Naive thymus-derived CD4-positive, alpha-beta T cell (primary cell): ENCODE measurements at regions of chr19 and their contacts with region 1.

Region 1: DNA sequence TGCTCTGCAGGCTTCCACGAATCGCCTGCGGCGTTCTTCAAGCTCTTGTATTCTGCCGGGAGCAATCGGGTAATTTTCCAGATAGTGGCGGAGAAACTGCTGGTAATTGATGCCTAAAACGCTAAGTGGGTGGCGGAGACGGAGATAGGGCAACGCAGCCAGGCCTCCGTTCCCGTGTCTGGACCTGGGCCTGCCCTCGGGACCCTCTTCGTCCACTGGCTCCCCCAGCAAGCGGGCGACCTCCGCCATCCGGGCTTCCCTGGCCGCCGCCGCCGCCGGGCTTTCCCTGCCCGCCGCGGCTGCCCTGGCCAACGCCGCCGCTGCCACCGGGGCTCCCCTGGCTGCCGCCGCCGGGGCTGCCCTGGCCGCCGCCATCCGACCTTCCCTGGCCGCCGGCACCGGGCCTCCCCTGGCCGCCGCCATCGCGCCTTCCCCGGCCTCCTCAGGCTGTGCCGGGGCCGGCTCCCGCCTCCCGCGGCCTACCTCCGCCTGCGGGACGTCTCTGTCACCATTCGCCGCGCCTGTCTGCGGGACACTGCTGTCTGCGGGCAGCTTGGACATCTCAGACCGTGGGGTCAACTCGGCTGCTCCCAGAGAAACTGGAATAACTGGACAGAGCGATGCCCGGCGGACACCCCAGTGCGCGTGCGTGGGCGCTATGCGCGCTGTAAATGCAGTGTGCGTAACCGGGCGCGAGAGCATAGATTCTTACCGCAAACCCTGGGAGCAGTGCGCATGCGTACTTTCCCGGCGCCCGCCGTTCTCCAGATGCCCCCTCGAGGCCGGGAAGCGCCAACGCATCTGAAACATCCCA is at the start of gene EID2:
- DNase-seq: peak; percentile 90 to 95 (median 91)
- ATAC-seq: peak; percentile 96
- H3K4me3 ChIP-seq: peak within 1 kb of the TSS; percentile 94
- H3K4me3 Mint-ChIP-seq: peak within 1 kb of the TSS; percentile 95 to 98 (median 97)
- H3K27ac ChIP-seq: peak within 1 kb of the TSS; percentile 98
- H3K27ac Mint-ChIP-seq: peak within 1 kb of the TSS; percentile 94 to 99 (median 98)
- H3K4me1 ChIP-seq: peaks cover 16 to 21% of the 10 kb centered on the region in 2 donors
- H3K4me1 Mint-ChIP-seq: peaks cover 45 to 85% (median 68%) of the 10 kb centered on the region in 7 donors
- H3K27me3 ChIP-seq: no peaks in the 10 kb centered on the region
- H3K27me3 Mint-ChIP-seq: peaks cover 0 to 2% (median 0%) of the 10 kb centered on the region in 5 donors
- total RNA-seq, gene EID2: 12.2 to 29.1 (median 16.1) TPM

Region 2: GRCh38 chr19:39212375-39212742 is 327.4 kb before region 1 on chr19:
- CTCF ChIA-PET with region 1: no interaction called
- POLR2A ChIA-PET with region 1: no interaction called
- intact Hi-C with region 1: loop called in 1 of 2 experiments (anchors 1 kb)
- DNase-seq: peak in 8 of 9 donors; percentile 24 to 58 (median 46)
- ATAC-seq: peak; percentile 80
- H3K4me3 ChIP-seq: no peak overlapping the region
- H3K4me3 Mint-ChIP-seq: no peak overlapping the region
- H3K27ac ChIP-seq: no peak overlapping the region
- H3K27ac Mint-ChIP-seq: no peak overlapping the region
- H3K4me1 ChIP-seq: no peaks in the 10 kb centered on the region
- H3K4me1 Mint-ChIP-seq: no peaks in the 10 kb centered on the region
- H3K27me3 ChIP-seq: no peaks in the 10 kb centered on the region
- H3K27me3 Mint-ChIP-seq: peaks cover 0 to 13% (median 5%) of the 10 kb centered on the region in 5 donors

Region 3: GRCh38 chr19:39435499-39436349 is 104.0 kb before region 1 on chr19 and contains the start of gene RPS16:
- CTCF ChIA-PET with region 1: interaction called, 24 read pairs
- POLR2A ChIA-PET with region 1: interaction called, 6 read pairs
- intact Hi-C with region 1: loop called in 1 of 2 experiments (anchors 1 kb)
- DNase-seq: peak; percentile 93 to 100 (median 98)
- ATAC-seq: peak; percentile 98
- H3K4me3 ChIP-seq: peak within 1 kb of the TSS; percentile 98
- H3K4me3 Mint-ChIP-seq: peak within 1 kb of the TSS; percentile 92 to 100 (median 98)
- H3K27ac ChIP-seq: peak within 1 kb of the TSS; percentile 97
- H3K27ac Mint-ChIP-seq: peak within 1 kb of the TSS; percentile 95 to 100 (median 99)
- H3K4me1 ChIP-seq: peaks cover 27% of the 10 kb centered on the region in 2 donors
- H3K4me1 Mint-ChIP-seq: peaks cover 20 to 53% (median 40%) of the 10 kb centered on the region in 7 donors
- H3K27me3 ChIP-seq: no peaks in the 10 kb centered on the region
- H3K27me3 Mint-ChIP-seq: peaks cover 0 to 5% (median 0%) of the 10 kb centered on the region in 5 donors
- total RNA-seq, gene RPS16: 2,281 to 4,335 (median 4,063) TPM

Region 4: GRCh38 chr19:39502640-39503417 is 36.9 kb before region 1 on chr19:
- CTCF ChIA-PET with region 1: interaction called, 3 read pairs
- POLR2A ChIA-PET with region 1: interaction called, 5 read pairs
- intact Hi-C with region 1: loop called in 1 of 2 experiments (anchors 2 kb)
- DNase-seq: peak; percentile 67 to 88 (median 78)
- ATAC-seq: peak; percentile 94
- H3K4me3 ChIP-seq: no peak overlapping the region
- H3K4me3 Mint-ChIP-seq: peak overlapping the region in 5 of 10 donors; percentile 4 to 48 (median 16)
- H3K27ac ChIP-seq: no peak overlapping the region
- H3K27ac Mint-ChIP-seq: peak overlapping the region in 3 of 9 donors; percentile 48 to 71 (median 66)
- H3K4me1 ChIP-seq: peaks cover 11 to 21% of the 10 kb centered on the region in 2 donors
- H3K4me1 Mint-ChIP-seq: peaks cover 26 to 38% (median 35%) of the 10 kb centered on the region in 7 donors
- H3K27me3 ChIP-seq: peaks cover 12 to 19% of the 10 kb centered on the region in 2 donors
- H3K27me3 Mint-ChIP-seq: peaks cover 55 to 73% (median 62%) of the 10 kb centered on the region in 5 donors

Region 5: DNA sequence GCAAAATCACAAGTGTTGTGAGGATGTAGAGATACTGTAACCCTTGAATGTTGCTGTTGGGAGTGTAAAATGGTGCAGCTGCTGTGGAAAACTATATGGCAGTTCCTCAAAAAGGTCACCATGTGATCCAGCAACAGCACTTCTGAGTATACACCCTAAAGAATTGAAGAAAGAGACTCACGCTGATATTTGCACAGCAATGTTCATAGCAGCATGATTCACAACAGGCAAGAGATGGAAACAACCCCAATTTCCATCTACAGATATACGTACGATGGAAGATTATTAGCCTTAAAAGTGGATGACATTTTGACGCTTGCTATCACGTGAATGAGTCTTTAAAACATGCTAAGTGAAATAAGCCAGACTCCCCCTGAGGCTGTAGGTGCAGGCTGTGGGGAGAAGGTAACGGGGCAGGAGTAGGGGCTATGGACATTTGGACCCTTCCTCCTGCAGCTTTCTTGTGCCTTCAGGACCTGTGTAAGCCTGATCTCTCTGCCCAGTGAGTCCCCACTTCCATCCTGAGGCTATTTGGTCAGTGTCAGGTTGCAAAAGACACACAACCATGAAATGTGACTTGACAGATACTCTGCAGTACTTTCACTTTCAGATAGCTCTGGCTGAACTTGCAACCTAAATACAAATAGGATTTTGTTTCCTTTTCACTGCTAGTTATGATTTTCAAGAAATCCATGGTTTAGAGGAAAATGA is 17.9 kb after region 1 on chr19:
- CTCF ChIA-PET with region 1: interaction called, 4 read pairs
- POLR2A ChIA-PET with region 1: interaction called, 10 read pairs
- intact Hi-C with region 1: no loop called
- DNase-seq: peak in 1 of 9 donors; percentile 16
- ATAC-seq: peak; percentile 50
- H3K4me3 ChIP-seq: peak overlapping the region; percentile 61
- H3K4me3 Mint-ChIP-seq: peak overlapping the region; percentile 48 to 89 (median 80)
- H3K27ac ChIP-seq: peak overlapping the region; percentile 64
- H3K27ac Mint-ChIP-seq: peak overlapping the region; percentile 91 to 98 (median 92)
- H3K4me1 ChIP-seq: peaks cover 10 to 18% of the 10 kb centered on the region in 2 donors
- H3K4me1 Mint-ChIP-seq: peaks cover 19 to 38% (median 31%) of the 10 kb centered on the region in 7 donors
- H3K27me3 ChIP-seq: no peaks in the 10 kb centered on the region
- H3K27me3 Mint-ChIP-seq: no peaks in the 10 kb centered on the region